CD4-positive, alpha-beta T cell (primary cell): ENCODE measurements at regions of chr16 and their contacts with region 1.

Region 1: DNA sequence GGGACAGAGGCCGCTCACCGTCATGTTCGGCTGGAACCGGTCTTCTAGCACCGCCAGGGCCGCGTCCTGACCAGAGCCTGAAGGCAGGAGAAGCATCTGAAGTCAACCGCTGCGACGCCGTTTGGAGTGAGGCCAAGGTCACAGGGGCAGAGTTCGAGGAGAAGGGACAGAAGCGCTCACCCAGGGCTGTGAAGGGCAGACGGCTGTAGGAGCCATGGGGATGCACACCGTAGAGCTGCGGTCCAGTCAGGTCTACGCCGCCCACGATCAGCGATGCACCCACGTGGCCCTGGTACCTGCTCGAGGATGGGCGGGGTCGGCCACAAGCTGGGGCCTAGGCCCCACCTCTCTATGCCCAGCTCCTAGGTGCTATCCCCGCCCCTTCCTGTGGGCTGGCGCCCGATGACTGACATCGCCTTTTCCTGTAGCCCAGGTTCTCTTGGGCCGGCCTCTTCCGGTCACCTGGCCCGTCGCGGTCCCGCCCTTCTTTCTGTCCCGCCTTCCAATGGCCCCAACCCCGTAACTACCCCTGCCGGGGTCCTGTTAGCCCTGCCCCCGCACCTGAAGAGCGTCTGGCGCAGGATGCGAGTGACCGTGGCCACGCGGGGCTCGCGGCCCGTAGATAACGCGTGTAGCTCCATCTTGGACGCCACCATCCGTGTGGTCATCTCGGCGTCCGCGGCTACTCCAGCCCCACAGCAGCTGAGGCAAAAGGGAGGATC is 1.1 kb downstream of the PSMB10 start:
- DNase-seq: peak; percentile 86 to 99 (median 94)
- ATAC-seq: peak; percentile 91
- H3K4me3 ChIP-seq: peak overlapping the region; percentile 96
- H3K4me3 Mint-ChIP-seq: peak overlapping the region; percentile 98
- H3K27ac ChIP-seq: peak overlapping the region; percentile 84 to 89
- H3K27ac Mint-ChIP-seq: peak overlapping the region; percentile 95
- H3K4me1 ChIP-seq: peaks cover 48% of the 10 kb centered on the region
- H3K4me1 Mint-ChIP-seq: peaks cover 38% of the 10 kb centered on the region
- H3K27me3 ChIP-seq: no peaks in the 10 kb centered on the region
- H3K27me3 Mint-ChIP-seq: no peaks in the 10 kb centered on the region
- CTCF ChIP-seq: no peak

Region 2: GRCh38 chr16:67561824-67562525 is 373.6 kb before region 1 on chr16:
- CTCF ChIA-PET with region 1: no interaction called
- POLR2A ChIA-PET with region 1: interaction called, 11 read pairs
- intact Hi-C with region 1: no loop called
- DNase-seq: peak; percentile 93 to 99 (median 96)
- ATAC-seq: peak; percentile 74
- H3K4me3 ChIP-seq: peak overlapping the region; percentile 83
- H3K4me3 Mint-ChIP-seq: peak overlapping the region; percentile 91
- H3K27ac ChIP-seq: peak overlapping the region; percentile 82 to 86
- H3K27ac Mint-ChIP-seq: peak overlapping the region; percentile 93
- H3K4me1 ChIP-seq: peaks cover 46% of the 10 kb centered on the region
- H3K4me1 Mint-ChIP-seq: peaks cover 45% of the 10 kb centered on the region
- H3K27me3 ChIP-seq: no peaks in the 10 kb centered on the region
- H3K27me3 Mint-ChIP-seq: no peaks in the 10 kb centered on the region
- CTCF ChIP-seq: peak; percentile 18

Region 3: GRCh38 chr16:67833418-67834241 is 101.9 kb before region 1 on chr16:
- CTCF ChIA-PET with region 1: no interaction called
- POLR2A ChIA-PET with region 1: interaction called, 16 read pairs
- intact Hi-C with region 1: no loop called
- DNase-seq: peak; percentile 87 to 95 (median 91)
- ATAC-seq: peak; percentile 99
- H3K4me3 ChIP-seq: peak overlapping the region; percentile 87
- H3K4me3 Mint-ChIP-seq: peak overlapping the region; percentile 93
- H3K27ac ChIP-seq: peak overlapping the region in 1 of 2 donors; percentile 34
- H3K27ac Mint-ChIP-seq: peak overlapping the region; percentile 72
- H3K4me1 ChIP-seq: peaks cover 20% of the 10 kb centered on the region
- H3K4me1 Mint-ChIP-seq: peaks cover 20% of the 10 kb centered on the region
- H3K27me3 ChIP-seq: no peaks in the 10 kb centered on the region
- H3K27me3 Mint-ChIP-seq: no peaks in the 10 kb centered on the region
- CTCF ChIP-seq: no peak

Region 4: GRCh38 chr16:67883872-67884261 is 51.7 kb before region 1 on chr16:
- CTCF ChIA-PET with region 1: interaction called, 10 read pairs
- POLR2A ChIA-PET with region 1: interaction called, 6 read pairs
- intact Hi-C with region 1: no loop called
- DNase-seq: peak; percentile 60 to 85 (median 72)
- ATAC-seq: peak; percentile 88
- H3K4me3 ChIP-seq: no peak overlapping the region
- H3K4me3 Mint-ChIP-seq: no peak overlapping the region
- H3K27ac ChIP-seq: no peak overlapping the region
- H3K27ac Mint-ChIP-seq: no peak overlapping the region
- H3K4me1 ChIP-seq: no peaks in the 10 kb centered on the region
- H3K4me1 Mint-ChIP-seq: no peaks in the 10 kb centered on the region
- H3K27me3 ChIP-seq: no peaks in the 10 kb centered on the region
- H3K27me3 Mint-ChIP-seq: no peaks in the 10 kb centered on the region
- CTCF ChIP-seq: peak; percentile 91

Region 5: DNA sequence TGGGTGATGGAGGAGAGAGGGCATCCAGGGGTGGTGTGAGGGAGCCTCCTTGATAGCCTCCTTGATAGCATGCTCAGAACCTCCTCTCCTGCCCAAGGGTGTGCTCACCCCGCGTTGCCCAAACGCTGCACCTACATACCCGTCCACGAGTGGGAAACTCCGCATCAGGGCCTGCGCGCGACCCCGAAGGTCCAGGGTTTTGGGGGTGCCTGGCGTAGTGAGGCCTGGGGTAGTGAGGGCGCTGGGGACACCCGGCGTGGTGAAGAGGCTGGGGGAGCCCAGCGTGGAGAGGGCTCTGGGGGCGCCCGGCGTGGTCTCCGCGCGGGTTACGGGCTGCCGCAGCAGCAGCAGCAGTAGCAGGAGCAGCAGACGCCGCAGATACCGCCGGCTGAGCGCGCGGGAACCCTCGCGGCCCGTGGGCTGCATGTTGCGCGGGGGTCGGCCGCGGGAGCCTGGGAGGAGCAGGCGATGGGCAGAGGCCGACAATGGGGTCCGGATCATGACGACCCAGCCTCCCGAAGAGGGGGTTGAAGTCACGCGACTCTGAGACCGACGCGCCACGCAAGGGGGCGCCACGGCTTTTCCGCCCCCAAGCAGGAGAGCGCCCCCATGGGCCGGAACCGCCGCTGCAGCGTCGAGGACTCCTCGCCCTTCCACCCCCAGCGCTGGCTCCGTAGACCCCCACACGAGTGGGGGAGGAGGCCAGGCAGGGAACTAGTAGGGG is 44.6 kb after region 1 on chr16 and contains the start of gene DPEP3:
- CTCF ChIA-PET with region 1: no interaction called
- POLR2A ChIA-PET with region 1: interaction called, 26 read pairs
- intact Hi-C with region 1: no loop called
- DNase-seq: peak in 2 of 14 experiments; percentile 31 to 49
- ATAC-seq: no peak
- H3K4me3 ChIP-seq: no peak within 1 kb of the TSS
- H3K4me3 Mint-ChIP-seq: no peak within 1 kb of the TSS
- H3K27ac ChIP-seq: no peak within 1 kb of the TSS
- H3K27ac Mint-ChIP-seq: no peak within 1 kb of the TSS
- H3K4me1 ChIP-seq: peaks cover 23% of the 10 kb centered on the region
- H3K4me1 Mint-ChIP-seq: peaks cover 23% of the 10 kb centered on the region
- H3K27me3 ChIP-seq: no peaks in the 10 kb centered on the region
- H3K27me3 Mint-ChIP-seq: no peaks in the 10 kb centered on the region
- CTCF ChIP-seq: no peak
- total RNA-seq, gene DPEP3: 0.53 to 0.63 TPM

Region 6: DNA sequence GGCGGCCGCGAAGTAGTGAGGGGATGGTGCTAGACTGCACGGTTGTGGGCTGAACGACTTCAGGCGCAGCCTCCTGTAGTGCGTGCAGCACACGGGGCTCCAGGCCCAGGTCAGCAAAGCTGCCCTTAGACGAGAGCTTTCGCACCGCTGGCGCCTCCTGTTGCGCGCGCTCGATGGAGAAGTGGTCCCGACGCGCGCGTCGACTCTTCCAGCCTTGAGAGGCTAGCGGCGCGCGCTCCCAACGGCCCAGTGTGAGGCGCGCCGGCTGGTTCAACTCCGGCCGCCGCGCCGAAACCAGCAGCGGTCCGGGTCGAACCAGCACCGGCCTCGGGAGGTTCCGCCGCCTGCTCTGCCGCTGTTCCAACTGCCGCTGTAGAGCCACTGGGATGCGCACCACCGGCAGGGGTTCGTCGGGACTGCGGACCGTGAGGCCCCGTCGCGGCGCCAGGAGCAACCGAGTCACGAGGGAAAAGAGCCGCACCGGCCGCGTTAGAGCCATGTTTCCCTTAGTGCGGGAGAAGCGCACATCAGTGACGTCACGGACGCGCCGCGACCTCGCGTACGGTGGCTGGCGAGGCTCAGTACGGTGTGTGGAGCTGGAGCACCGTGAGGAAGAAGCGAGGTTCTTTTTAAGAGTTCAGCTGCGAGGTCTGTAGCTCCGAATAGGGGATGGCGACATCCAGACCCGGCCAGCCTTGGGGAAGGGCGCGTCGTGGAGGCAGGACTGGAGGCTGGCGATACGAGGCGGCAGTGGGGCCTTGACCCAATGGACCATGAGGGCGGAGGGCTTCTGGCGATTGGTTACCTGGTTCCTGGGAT is 87.3 kb after region 1 on chr16 and contains the starts of genes DDX28 and DUS2:
- CTCF ChIA-PET with region 1: interaction called, 3 read pairs
- POLR2A ChIA-PET with region 1: interaction called, 17 read pairs
- intact Hi-C with region 1: loop called in 1 of 2 experiments (anchors 2 kb)
- DNase-seq: peak; percentile 88 to 98 (median 94)
- ATAC-seq: peak; percentile 95
- H3K4me3 ChIP-seq: peak within 1 kb of the TSS; percentile 85
- H3K4me3 Mint-ChIP-seq: peak within 1 kb of the TSS; percentile 93
- H3K27ac ChIP-seq: peak within 1 kb of the TSS; percentile 78 to 83
- H3K27ac Mint-ChIP-seq: peak within 1 kb of the TSS; percentile 90
- H3K4me1 ChIP-seq: peaks cover 30% of the 10 kb centered on the region
- H3K4me1 Mint-ChIP-seq: peaks cover 28% of the 10 kb centered on the region
- H3K27me3 ChIP-seq: no peaks in the 10 kb centered on the region
- H3K27me3 Mint-ChIP-seq: no peaks in the 10 kb centered on the region
- CTCF ChIP-seq: no peak
- total RNA-seq, gene DDX28: 18.9 to 19.4 TPM
- total RNA-seq, gene DUS2: 10.4 to 13.6 TPM